ENCODE measurements at regions of chr9 and their contacts with region 1.

Region 1: DNA sequence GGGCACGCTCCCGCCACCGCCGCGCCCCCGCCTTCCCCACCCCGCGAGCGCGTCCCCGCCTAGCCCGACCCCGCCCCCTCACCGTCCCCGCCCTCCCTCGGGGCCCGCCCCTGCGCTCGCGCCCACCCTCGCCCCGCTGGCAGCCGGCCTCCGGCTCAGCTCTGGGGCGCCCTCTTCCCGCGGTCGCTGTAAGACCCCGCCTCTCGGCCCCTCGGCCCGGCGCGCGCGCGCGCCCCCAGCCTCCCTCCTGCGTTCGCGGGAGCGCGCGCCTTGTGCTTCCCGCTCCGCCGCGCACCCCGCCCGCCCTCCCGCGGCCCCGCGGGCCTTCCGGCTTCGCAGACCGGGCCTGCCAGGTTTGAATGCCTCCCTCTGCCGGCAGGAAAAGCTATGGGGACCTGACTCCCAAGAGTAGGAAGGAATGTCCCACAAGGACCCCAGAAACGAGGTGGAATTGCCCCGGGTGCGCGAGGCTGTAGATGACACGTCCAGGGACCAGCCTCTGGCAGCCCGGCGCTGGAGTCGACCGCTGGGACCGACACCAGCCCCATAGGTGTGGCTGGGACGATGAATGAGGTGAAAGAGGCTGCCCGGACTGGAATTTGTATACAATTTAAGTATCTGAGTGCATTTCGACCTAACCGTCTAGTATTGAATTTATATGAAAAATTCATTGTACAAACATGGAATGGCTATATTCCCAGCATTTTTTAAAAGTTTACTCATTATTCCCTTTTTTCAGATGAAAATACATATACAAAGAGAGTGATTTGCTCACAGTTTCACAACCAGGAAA is 416 bp upstream of the PTBP3 start:
- DNase-seq: peak; percentile 57
- ATAC-seq: peak; percentile 80
- H3K4me3 ChIP-seq: peak overlapping the region; percentile 94
- H3K27ac ChIP-seq: peak overlapping the region; percentile 77
- H3K4me1 ChIP-seq: peaks cover 4% of the 10 kb centered on the region; the same call in 1 of the 2 replicates
- H3K27me3 ChIP-seq: no peaks in the 10 kb centered on the region
- CTCF ChIP-seq: peak in 2 of 3 experiments; percentile 18 to 49; a peak in 5 of 6 replicates
- EP300 ChIP-seq: no peak
- POLR2A ChIP-seq: no peak
- RAD21 ChIP-seq: peak; percentile 58

Region 2: GRCh38 chr9:111896353-111896958 is 437.4 kb before region 1 on chr9 and contains the start of gene UGCG:
- CTCF ChIA-PET with region 1: no interaction called
- POLR2A ChIA-PET with region 1: no interaction called
- RAD21 ChIA-PET with region 1: no interaction called
- SMC1A ChIA-PET with region 1: no interaction called
- in situ Hi-C with region 1: no loop called
- intact Hi-C with region 1: loop called (anchors 5 kb)
- DNase-seq: no peak
- ATAC-seq: peak; percentile 79
- H3K4me3 ChIP-seq: peak within 1 kb of the TSS; percentile 80
- H3K27ac ChIP-seq: peak within 1 kb of the TSS; percentile 93
- H3K4me1 ChIP-seq: no peaks in the 10 kb centered on the region; the same call in 1 of the 2 replicates
- H3K27me3 ChIP-seq: no peaks in the 10 kb centered on the region
- CTCF ChIP-seq: no peak
- EP300 ChIP-seq: 0 out of 4 replicates have a peak, but pooled peaks of 1 of the 2 experiments have one; percentile 14
- POLR2A ChIP-seq: peak; percentile 93
- RAD21 ChIP-seq: 0 out of 2 replicates have a peak, but pooled peaks have one; percentile 2
- polyA plus RNA-seq, gene UGCG: 48.0 to 62.1 TPM

Region 3: GRCh38 chr9:112112941-112113681 is 220.7 kb before region 1 on chr9:
- CTCF ChIA-PET with region 1: interaction called, 8 read pairs
- POLR2A ChIA-PET with region 1: no interaction called
- RAD21 ChIA-PET with region 1: interaction called, 3 read pairs
- SMC1A ChIA-PET with region 1: interaction called, 4 read pairs
- in situ Hi-C with region 1: no loop called
- intact Hi-C with region 1: loop called (anchors 5 kb)
- DNase-seq: no peak
- ATAC-seq: peak; percentile 75
- H3K4me3 ChIP-seq: no peak overlapping the region
- H3K27ac ChIP-seq: no peak overlapping the region
- H3K4me1 ChIP-seq: no peaks in the 10 kb centered on the region
- H3K27me3 ChIP-seq: no peaks in the 10 kb centered on the region
- CTCF ChIP-seq: peak; percentile 56 to 74 (median 57); a peak in 5 of 6 replicates
- EP300 ChIP-seq: no peak
- POLR2A ChIP-seq: no peak
- RAD21 ChIP-seq: peak; percentile 88

Region 4: GRCh38 chr9:112174218-112174964 is 159.4 kb before region 1 on chr9:
- CTCF ChIA-PET with region 1: no interaction called
- POLR2A ChIA-PET with region 1: no interaction called
- RAD21 ChIA-PET with region 1: no interaction called
- SMC1A ChIA-PET with region 1: no interaction called
- in situ Hi-C with region 1: no loop called
- intact Hi-C with region 1: loop called (anchors 5 kb)
- DNase-seq: peak; percentile 30
- ATAC-seq: peak; percentile 93
- H3K4me3 ChIP-seq: peak overlapping the region; percentile 67
- H3K27ac ChIP-seq: 0 out of 2 replicates have a peak overlapping the region, but pooled peaks have one; percentile 6
- H3K4me1 ChIP-seq: peaks cover 6% of the 10 kb centered on the region
- H3K27me3 ChIP-seq: no peaks in the 10 kb centered on the region; a peak in 1 of 4 replicates
- CTCF ChIP-seq: no peak
- EP300 ChIP-seq: no peak
- POLR2A ChIP-seq: peak; percentile 38
- RAD21 ChIP-seq: no peak

Region 5: GRCh38 chr9:112218908-112219307 is 114.9 kb before region 1 on chr9:
- CTCF ChIA-PET with region 1: interaction called, 3 read pairs
- POLR2A ChIA-PET with region 1: no interaction called
- RAD21 ChIA-PET with region 1: interaction called, 6 read pairs
- SMC1A ChIA-PET with region 1: interaction called, 4 read pairs
- in situ Hi-C with region 1: no loop called
- intact Hi-C with region 1: loop called (anchors 2 kb)
- DNase-seq: peak; percentile 85
- ATAC-seq: peak; percentile 98
- H3K4me3 ChIP-seq: no peak overlapping the region
- H3K27ac ChIP-seq: peak overlapping the region; percentile 65
- H3K4me1 ChIP-seq: peaks cover 26% of the 10 kb centered on the region
- H3K27me3 ChIP-seq: no peaks in the 10 kb centered on the region
- CTCF ChIP-seq: no peak
- EP300 ChIP-seq: peak in 1 of 2 experiments; percentile 50; a peak in 1 of 4 replicates
- POLR2A ChIP-seq: no peak
- RAD21 ChIP-seq: 0 out of 2 replicates have a peak, but pooled peaks have one; percentile 29

Region 6: GRCh38 chr9:112224401-112225289 is 109.2 kb before region 1 on chr9:
- CTCF ChIA-PET with region 1: interaction called, 3 read pairs
- POLR2A ChIA-PET with region 1: no interaction called
- RAD21 ChIA-PET with region 1: interaction called, 4 read pairs
- SMC1A ChIA-PET with region 1: interaction called, 10 read pairs
- in situ Hi-C with region 1: no loop called
- intact Hi-C with region 1: loop called (anchors 2 kb)
- DNase-seq: no peak
- ATAC-seq: peak; percentile 87
- H3K4me3 ChIP-seq: no peak overlapping the region
- H3K27ac ChIP-seq: peak overlapping the region; percentile 5; the same call in 1 of the 2 replicates
- H3K4me1 ChIP-seq: peaks cover 23% of the 10 kb centered on the region
- H3K27me3 ChIP-seq: no peaks in the 10 kb centered on the region
- CTCF ChIP-seq: no peak
- EP300 ChIP-seq: no peak; a peak in 1 of 4 replicates
- POLR2A ChIP-seq: no peak
- RAD21 ChIP-seq: no peak

Region 7: DNA sequence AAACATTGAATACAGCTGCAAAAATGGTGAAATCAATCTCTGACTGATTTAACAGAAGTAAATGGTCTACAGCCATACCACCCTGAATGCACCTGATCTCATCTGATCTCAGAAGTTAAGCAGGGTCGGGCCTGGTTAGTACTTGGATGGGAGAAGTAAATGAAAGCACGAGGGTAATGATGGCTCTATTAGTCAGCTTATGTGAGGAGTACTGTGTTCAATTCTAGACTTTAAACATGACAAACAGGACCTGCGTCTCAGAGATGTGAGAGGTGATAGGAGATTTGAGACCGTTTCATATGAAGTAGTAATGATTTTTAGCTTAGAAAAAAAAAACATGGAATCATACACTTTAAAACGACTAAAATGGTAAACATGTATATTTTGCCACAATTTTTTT is 81.6 kb before region 1 on chr9:
- CTCF ChIA-PET with region 1: no interaction called
- POLR2A ChIA-PET with region 1: no interaction called
- RAD21 ChIA-PET with region 1: no interaction called
- SMC1A ChIA-PET with region 1: interaction called, 3 read pairs
- in situ Hi-C with region 1: no loop called
- intact Hi-C with region 1: loop called (anchors 5 kb)
- DNase-seq: no peak
- ATAC-seq: no peak
- H3K4me3 ChIP-seq: no peak overlapping the region
- H3K27ac ChIP-seq: no peak overlapping the region
- H3K4me1 ChIP-seq: peaks cover 15% of the 10 kb centered on the region
- H3K27me3 ChIP-seq: no peaks in the 10 kb centered on the region
- CTCF ChIP-seq: no peak
- EP300 ChIP-seq: no peak
- POLR2A ChIP-seq: no peak
- RAD21 ChIP-seq: no peak